Calu3 (cell line): ENCODE measurements at regions of chr20 and their contacts with region 1.

Region 1: DNA sequence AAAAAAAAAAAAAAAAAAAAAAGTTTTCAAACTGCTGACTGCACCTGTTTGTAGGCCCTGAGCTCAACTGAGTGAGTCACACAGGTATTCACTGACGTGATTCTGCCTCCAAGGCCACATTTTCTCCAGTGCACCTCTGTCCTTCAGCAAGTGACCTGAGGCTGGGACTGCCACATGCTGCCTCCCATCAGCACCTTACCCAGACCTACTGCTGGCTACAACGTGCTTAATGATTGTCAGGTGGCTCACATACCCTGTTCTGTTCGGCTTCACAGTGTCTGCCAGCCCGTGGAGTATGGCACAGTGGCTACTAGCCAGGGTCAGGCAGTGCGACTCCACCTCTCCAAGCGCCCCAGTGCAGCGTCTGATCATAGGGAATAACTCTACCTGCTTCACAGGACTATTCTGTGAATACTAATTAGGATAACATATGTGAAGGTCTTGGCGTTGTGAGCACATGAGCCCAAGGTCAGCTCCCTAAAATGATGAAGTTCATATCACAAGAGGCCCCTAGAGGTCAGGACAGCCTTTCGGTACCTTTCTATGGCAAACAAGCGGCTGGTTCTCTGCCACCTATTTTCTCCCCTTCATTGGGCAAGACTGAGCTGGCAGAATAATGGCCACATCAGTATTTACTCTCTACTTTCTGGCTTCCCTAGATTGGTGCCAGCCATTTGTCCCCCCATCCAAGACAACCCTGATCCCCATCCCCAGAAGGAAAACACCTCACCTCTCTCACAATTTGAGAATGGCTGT is 28.1 kb downstream of the RIPOR3 start:
- DNase-seq: peak; percentile 79
- H3K4me3 Mint-ChIP-seq: no peak overlapping the region
- H3K27ac Mint-ChIP-seq: peak overlapping the region; percentile 83
- H3K4me1 Mint-ChIP-seq: peaks cover 84% of the 10 kb centered on the region
- H3K27me3 Mint-ChIP-seq: no peaks in the 10 kb centered on the region
- CTCF ChIP-seq: peak; percentile 63

Region 2: DNA sequence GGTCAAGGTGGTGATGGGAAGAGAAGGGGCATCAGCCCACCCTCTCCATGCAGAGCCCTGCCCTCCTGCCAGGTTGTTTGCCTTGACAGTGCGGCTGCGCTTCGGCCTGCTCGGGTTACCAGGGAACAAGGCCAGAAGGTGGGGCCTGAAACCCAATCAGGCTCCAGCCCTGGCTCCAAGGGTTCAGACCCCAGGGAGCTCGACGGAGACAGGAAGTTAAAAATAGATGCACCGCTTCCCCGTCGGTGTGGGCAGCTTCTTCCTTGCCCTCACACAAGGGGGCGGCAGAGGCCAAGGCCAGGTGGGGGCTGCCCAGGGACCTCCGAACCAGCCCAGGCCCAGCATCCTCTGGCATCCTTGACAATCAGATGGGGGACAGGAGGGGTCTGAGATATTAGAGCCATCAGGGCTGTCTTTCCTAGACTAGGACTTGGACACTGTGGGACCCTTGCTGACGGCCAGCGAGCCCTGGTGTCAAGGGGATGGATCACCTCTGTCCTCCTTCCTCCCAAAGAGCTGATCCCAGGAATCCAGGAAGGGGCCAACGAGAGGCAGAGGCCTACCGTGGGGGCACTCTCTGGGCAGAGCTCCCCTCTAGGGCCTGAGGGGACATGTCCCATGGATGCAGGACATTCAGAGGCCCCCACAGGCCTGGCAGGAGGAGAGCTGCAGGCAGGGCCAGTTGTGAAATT is 37.1 kb before region 1 on chr20:
- CTCF ChIA-PET with region 1: interaction called, 28 read pairs
- intact Hi-C with region 1: no loop called
- DNase-seq: peak; percentile 91
- H3K4me3 Mint-ChIP-seq: no peak overlapping the region
- H3K27ac Mint-ChIP-seq: peak overlapping the region; percentile 72
- H3K4me1 Mint-ChIP-seq: peaks cover 44% of the 10 kb centered on the region
- H3K27me3 Mint-ChIP-seq: no peaks in the 10 kb centered on the region
- CTCF ChIP-seq: peak; percentile 97

Region 3: GRCh38 chr20:50645253-50646118 is 17.8 kb before region 1 on chr20:
- CTCF ChIA-PET with region 1: interaction called, 12 read pairs
- intact Hi-C with region 1: no loop called
- DNase-seq: peak; percentile 98
- H3K4me3 Mint-ChIP-seq: peak overlapping the region; percentile 3
- H3K27ac Mint-ChIP-seq: peak overlapping the region; percentile 53
- H3K4me1 Mint-ChIP-seq: peaks cover 33% of the 10 kb centered on the region
- H3K27me3 Mint-ChIP-seq: no peaks in the 10 kb centered on the region
- CTCF ChIP-seq: no peak

Region 4: DNA sequence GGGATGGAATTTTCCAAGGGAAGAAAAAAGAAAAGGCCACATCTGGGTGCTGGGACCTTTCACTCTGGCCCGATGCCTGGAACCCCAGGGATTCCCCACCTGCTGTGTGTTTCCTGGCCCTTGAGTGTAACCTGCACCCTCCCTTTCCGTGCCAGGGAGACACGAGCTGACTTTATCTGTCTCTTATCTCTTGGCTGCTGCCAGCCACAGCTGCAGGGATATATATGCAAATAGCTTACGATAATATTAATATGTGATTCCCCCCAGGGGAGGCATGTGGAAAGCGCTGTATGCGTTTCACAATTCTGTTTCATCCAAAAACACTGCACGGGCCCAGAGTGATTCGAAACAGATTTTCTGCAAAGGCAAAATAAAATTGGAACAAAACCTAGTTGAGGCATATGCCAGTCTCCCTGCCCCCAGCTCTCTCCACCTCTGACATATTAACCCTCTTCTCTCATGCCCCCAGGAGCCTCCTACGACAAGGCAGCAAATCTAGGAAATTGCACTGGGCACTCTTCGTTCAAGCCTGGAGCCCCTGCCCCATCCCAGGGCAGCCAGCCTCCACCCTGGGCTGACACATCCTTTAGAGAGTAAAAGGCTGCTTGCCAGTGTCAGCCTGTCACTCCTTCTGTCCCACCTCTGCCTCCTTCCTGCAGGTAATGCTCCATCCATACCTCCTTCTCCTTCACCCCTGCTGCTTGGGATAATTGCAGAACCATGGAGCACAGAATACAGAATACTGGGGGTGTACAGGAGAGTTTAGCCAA is 26.8 kb after region 1 on chr20:
- CTCF ChIA-PET with region 1: interaction called, 12 read pairs
- intact Hi-C with region 1: no loop called
- DNase-seq: peak; percentile 64
- H3K4me3 Mint-ChIP-seq: peak overlapping the region; percentile 10
- H3K27ac Mint-ChIP-seq: peak overlapping the region; percentile 17
- H3K4me1 Mint-ChIP-seq: peaks cover 23% of the 10 kb centered on the region
- H3K27me3 Mint-ChIP-seq: no peaks in the 10 kb centered on the region
- CTCF ChIP-seq: no peak

Region 5: DNA sequence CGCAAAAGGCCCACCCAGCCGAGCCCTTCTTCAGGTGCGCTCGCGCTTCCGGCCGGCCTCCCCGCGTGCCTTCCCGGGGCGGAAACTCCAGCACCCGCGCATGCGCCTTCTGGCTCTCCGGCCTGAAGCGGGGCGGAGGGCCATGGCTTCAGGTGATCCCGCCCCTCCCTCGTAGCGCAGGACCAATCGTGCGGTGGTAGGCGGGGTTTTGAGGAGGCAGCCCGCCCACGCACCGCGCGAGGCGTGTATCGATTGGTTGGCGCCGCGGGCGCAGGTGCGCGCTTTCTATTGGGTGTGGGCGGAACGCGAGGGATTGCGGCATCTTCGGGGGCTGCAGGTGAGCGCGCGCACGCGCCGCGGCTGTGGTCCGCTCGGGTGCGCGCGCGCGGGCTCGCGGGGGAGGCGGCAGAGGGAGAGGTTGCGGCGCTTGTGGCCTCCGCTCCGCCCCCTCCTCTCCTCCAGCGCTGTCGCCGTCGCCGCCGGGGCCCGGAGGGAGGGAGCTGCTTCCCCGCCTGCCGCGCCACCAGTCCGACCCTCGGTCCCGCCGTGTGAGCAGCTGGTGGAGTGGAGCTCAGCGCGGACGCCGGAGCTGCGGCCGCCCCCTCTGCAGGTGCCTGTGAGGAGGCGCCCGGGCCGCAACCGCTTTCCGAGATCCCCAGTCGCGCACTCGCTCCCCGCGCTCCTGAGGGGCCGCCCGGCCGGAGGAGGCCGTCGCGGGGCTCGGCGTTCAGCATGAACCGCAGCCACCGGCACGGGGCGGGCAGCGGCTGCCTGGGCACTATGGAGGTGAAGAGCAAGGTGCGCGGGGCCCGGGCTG is 68.0 kb after region 1 on chr20 and contains the start of gene PARD6B:
- CTCF ChIA-PET with region 1: interaction called, 82 read pairs
- intact Hi-C with region 1: loop called (anchors 2 kb)
- DNase-seq: peak; percentile 100
- H3K4me3 Mint-ChIP-seq: peak within 1 kb of the TSS; percentile 61
- H3K27ac Mint-ChIP-seq: peak within 1 kb of the TSS; percentile 99
- H3K4me1 Mint-ChIP-seq: peaks cover 56% of the 10 kb centered on the region
- H3K27me3 Mint-ChIP-seq: no peaks in the 10 kb centered on the region
- CTCF ChIP-seq: no peak
- total RNA-seq, gene PARD6B: 114 and 127 TPM in 2 replicates

Region 6: GRCh38 chr20:50744143-50744792 is 81.0 kb after region 1 on chr20:
- CTCF ChIA-PET with region 1: interaction called, 67 read pairs
- intact Hi-C with region 1: loop called (anchors 2 kb)
- DNase-seq: peak; percentile 73
- H3K4me3 Mint-ChIP-seq: peak overlapping the region; percentile 63
- H3K27ac Mint-ChIP-seq: peak overlapping the region; percentile 90
- H3K4me1 Mint-ChIP-seq: peaks cover 88% of the 10 kb centered on the region
- H3K27me3 Mint-ChIP-seq: no peaks in the 10 kb centered on the region
- CTCF ChIP-seq: no peak

Region 7: DNA sequence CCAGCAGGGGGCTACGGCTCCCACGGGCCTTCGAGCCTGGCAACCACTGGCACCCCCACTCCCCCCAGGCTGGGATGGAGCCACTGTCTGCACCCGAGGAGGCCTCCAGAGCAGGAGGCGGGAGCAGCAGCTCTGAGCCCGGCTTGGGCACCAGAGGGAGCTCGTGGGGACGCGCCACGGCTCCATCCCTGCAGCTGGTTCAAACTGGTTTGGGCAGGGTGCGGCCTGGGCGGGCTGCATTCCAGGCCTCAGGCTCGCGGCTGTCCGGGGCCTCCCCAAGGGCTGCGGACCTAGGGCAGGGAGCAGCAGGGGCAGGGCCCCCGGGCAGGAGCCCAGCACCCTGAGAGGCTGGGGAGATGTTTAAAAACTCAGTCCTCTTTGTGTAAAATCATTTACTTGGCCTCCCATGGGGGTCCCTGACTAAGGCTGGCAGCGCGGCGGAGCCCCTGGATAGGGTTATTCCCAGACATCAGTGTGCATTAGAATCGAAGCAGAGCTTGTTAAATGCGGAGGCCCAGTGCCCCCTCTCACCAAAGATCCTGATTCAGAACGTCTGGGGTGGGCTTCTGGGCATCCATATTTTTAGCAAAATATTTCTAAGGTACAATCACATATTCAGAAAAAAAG is 127.5 kb after region 1 on chr20:
- CTCF ChIA-PET with region 1: interaction called, 22 read pairs
- intact Hi-C with region 1: loop called (anchors 1 kb)
- DNase-seq: peak; percentile 99
- H3K4me3 Mint-ChIP-seq: peak overlapping the region; percentile 48
- H3K27ac Mint-ChIP-seq: peak overlapping the region; percentile 87
- H3K4me1 Mint-ChIP-seq: peaks cover 42% of the 10 kb centered on the region
- H3K27me3 Mint-ChIP-seq: no peaks in the 10 kb centered on the region
- CTCF ChIP-seq: peak; percentile 96